Cardiac septum (tissue), 1 donor: ENCODE measurements at regions of chrX and their contacts with region 1.

Region 1: DNA sequence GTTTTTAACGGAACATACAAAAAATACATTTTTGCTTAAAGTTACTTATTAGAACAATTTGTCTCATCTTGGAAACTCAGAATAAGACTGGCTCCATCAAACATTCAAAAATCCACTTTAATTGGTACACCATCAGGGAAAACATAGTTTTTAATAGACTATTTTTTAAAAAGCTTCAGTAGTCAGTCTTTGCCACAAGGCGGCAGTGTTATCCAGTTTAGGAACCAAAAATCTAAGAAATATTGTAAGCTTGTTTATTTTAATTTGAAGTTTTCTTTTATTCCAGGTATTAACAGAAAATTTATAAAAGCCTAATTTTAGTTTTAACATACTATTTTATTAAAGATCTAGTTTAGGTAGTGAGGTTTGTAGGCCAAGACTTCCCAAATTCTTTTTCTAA is 107.7 kb downstream of the APOOL start:
- DNase-seq: no peak

Region 2: DNA sequence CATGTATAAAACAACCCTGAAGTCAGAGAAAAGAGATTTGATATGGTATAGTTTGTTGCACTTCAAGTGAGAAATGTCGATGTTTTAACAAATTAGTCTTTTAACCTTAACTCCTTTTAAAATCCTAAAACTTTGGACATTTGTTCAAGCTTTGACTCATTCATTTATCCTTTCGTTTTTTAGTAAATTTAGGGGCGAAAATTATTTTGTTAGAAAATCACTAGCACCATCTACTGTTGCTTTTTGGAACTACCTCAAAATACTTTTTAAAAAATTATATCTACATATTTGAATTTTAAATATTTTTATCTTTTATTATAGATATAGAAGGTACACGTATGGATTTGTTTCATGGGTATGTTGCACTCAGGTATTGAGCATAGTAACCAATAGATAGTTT is 433.3 kb after region 1 on chrX:
- intact Hi-C with region 1: loop called (anchors 5 kb)
- DNase-seq: no peak

Region 3: GRCh38 chrX:86322918-86323317 is 1211.6 kb after region 1 on chrX:
- intact Hi-C with region 1: no loop called
- DNase-seq: no peak